HEK293 (cell line): ENCODE measurements at regions of chr11 and their contacts with region 1.

Region 1: GRCh38 chr11:7501894-7502293 is 11.9 kb upstream of the PPFIBP2 start:
- H3K4me3 ChIP-seq: no peak overlapping the region
- H3K27ac ChIP-seq: no peak overlapping the region
- H3K4me1 ChIP-seq: no peaks in the 10 kb centered on the region
- CTCF ChIP-seq: no peak

Region 2: GRCh38 chr11:7513234-7514098 is 11.6 kb after region 1 on chr11 and contains the start of gene PPFIBP2:
- CTCF ChIA-PET with region 1: interaction called, 14 read pairs
- POLR2A ChIA-PET with region 1: no interaction called
- H3K4me3 ChIP-seq: peak within 1 kb of the TSS; percentile 82
- H3K27ac ChIP-seq: no peak within 1 kb of the TSS
- H3K4me1 ChIP-seq: no peaks in the 10 kb centered on the region
- CTCF ChIP-seq: peak; percentile 54

Region 3: DNA sequence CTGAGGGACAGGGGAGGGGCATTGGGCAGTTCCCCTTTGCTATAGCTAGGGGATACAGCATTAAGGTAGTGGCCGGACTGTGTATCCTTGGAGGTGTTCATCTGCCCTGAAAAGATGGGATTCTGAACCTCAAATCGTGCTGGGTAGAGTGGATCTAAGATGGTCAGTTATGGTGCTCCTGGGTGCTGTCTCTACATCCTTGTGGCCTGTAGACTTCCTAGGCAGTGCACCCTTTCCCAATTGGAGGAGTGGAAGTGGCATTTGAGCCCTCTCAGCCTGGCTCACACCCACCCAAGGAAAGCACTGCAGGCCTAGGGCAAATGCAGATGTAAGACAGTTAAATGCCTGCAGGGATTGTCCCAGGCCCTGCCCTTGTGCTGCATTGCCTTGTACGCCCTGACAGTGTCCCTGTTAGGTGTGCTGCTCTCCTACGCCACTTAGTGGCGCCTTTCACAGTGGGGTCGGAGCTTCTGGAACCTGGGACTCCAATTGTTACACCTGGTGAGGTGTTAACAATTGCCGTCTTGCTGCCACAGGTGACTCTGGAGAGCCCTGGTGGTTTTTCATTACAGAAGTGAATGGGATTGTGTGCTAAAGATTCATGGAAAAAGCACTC is 46.9 kb after region 1 on chr11:
- CTCF ChIA-PET with region 1: no interaction called
- POLR2A ChIA-PET with region 1: no interaction called
- H3K4me3 ChIP-seq: no peak overlapping the region
- H3K27ac ChIP-seq: no peak overlapping the region
- H3K4me1 ChIP-seq: no peaks in the 10 kb centered on the region
- CTCF ChIP-seq: 0 out of 2 replicates have a peak, but pooled peaks have one; percentile 16

Region 4: DNA sequence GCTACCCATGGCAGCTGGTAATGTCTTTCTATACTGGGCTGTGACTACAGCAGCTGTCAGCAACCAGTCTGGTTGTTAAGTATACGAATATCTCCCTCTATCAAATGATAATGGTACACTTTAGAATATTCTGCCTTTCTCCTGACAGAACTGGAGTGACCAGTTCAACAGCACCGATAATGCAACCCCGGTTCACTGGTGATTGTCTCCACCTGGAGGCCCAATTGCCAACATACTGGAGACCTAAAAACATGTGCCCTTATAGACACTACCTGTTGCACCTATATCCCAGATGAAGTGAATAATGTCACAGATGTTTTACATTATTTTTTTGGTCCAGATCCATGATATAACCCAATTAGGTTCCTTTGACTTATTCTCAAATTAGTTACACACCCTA is 273.8 kb after region 1 on chr11:
- CTCF ChIA-PET with region 1: no interaction called
- POLR2A ChIA-PET with region 1: no interaction called
- H3K4me3 ChIP-seq: no peak overlapping the region
- H3K27ac ChIP-seq: no peak overlapping the region
- H3K4me1 ChIP-seq: no peaks in the 10 kb centered on the region
- CTCF ChIP-seq: no peak